Left cardiac atrium (tissue), 4 donors: ENCODE measurements at regions of chr1 and their contacts with region 1.

Region 1: DNA sequence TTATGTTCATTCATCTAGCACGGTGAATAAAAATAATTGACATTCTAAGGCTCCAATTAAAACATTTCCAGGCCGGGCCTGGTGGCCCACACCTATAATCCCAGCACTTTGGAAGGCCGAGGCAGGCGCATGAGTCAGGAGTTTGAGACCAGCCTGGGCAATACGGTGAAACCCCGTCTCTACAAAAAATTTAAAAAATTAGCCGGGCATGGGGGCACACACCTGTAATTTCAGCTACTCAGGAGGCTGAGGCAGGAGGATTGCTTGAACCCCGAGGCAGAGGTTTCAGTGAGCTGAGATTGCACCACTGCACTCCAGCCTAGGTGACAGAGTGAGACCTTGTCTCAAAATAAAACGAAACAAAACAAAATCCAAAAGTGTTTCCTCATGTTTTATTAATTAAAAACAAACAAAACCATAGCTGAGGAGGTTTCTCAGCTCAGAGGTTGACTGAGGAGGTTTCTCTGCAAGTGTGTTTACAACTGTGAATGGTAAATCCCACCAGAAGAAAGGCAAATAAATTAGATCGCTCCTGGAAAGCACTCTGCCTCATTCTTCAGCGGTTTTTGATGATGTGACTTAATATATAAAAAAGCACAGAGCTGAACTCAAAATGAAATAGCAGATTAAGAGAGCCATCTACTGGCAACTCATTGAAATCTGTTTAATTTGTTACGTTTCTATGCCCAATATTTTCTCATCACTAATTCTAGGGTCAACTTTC is 37.7 kb upstream of the ATG4C start:
- DNase-seq: no peak
- ATAC-seq: peak in 1 of 2 donors; percentile 38

Region 2: DNA sequence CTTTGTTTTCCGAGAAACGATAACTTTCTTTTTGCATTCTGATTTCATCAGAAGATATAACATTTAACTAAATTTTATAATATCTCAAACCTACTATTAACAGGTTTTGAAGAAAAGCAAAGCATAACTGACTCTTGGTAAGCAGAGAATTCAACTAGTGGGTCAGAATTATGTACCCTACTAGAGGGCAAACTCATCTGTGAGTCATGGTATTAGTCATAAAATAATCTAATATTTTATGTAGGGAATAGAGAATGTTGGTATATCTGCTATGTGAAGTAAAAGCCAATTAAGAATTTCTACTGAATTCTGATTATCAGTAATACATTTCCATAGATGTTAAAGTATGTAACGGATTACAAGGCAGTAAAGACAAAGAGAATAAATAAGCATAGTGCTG is 252.6 kb before region 1 on chr1:
- intact Hi-C with region 1: no loop called
- DNase-seq: no peak
- ATAC-seq: no peak

Region 3: GRCh38 chr1:62508187-62508758 is 238.0 kb before region 1 on chr1:
- intact Hi-C with region 1: loop called (anchors 5 kb)
- DNase-seq: no peak
- ATAC-seq: peak in 1 of 2 donors; percentile 27

Region 4: GRCh38 chr1:62514746-62515423 is 231.4 kb before region 1 on chr1:
- intact Hi-C with region 1: loop called in 1 of 2 experiments (anchors 5 kb)
- DNase-seq: no peak
- ATAC-seq: no peak

Region 5: DNA sequence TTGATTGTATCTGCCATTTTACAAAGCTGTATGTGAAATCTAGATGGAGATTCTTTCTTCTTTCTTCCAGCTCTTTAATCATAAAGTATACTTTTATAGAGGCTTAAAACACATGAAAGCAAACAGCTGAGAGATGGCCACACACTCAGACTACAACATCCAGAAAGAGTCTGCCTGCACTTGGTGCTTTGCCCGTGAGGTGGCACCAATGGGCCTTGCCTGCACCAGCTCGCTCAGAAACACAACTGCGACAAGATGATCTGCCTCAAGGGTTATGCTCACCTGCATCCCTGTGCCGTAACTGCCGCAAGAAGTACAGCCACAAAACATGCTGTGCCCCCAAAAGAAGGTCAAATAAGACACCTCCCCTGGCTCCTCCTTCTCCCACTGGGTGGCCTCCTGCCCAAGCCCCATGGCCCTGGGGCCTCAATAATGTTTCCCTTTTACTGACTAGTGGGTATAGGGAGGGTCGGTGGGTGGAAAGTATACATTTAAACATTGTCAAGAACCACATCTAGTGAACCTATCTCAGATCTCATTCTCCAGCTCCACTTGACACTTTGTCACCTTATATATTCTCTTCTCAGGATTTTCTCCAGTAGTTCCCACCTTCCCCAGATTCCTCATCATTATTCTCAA is 215.6 kb before region 1 on chr1:
- intact Hi-C with region 1: loop called in 1 of 2 experiments (anchors 5 kb)
- DNase-seq: peak; percentile 28
- ATAC-seq: peak; percentile 63 to 72